ENCODE measurements at regions of chr6 and their contacts with region 1.

Region 1: DNA sequence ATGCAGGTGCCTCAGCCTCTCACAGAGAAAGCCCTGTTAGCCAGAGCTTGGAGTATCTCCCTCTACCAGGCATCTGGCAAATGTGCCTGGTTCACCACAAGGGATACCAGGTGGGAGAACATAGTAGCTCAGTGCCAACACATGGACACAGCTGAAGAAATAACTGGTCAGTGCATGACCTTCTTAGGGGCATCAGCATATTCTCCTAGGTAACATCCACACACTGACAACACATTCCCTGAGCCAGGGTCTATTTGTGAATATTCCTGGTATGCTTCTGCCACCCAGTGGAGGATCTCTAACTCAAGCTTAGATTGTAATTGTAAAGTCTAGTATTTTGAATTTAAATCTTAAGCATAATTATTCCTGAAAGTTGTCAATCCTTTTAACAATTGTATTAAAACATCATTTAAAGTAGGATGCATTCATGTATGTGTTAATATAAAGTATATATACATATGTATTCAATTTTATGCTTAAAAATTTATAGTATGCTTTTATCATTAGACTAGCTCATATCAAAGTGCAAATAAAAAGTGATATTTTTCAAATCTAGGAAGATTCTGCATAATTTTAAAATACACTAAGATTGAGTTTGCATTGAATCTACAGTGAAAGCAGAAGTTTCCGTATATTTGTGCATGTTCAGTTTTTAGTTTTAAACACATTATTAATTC is 45.3 kb upstream of the COL21A1 start:
- DNase-seq: no peak
- H3K4me3 ChIP-seq: no peak overlapping the region
- H3K27ac ChIP-seq: no peak overlapping the region
- H3K4me1 ChIP-seq: peaks cover 0 to 9% (median 0%) of the 10 kb centered on the region in 4 donors
- H3K27me3 ChIP-seq: no peaks in the 10 kb centered on the region
- CTCF ChIP-seq: peak; percentile 50 to 72

Region 2: DNA sequence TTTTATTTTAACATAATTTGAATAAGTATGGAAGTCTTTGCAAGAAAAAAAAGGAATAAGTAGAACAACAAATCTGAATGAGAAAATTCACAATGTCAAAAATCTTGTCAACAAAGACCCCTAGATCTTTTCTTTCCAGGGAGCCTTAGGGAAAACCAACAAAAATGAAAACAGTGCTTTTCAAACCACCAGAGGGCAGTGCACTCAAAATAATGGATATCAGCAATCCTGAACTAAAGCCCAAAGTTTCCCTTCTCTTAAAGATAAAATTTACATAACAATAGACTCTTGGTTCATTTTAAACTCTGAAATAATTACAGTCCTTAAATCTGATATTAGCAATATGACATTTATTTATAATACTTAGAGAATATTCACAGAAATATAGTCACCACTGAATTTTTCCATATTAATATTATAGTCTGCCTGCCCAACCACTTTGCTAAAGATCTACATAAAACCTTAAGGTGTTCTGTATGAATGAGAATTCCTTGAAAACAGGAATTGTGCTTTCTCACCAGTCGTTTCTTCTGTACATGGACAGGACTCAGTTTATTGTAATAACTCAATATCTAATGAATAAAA is 311.9 kb before region 1 on chr6:
- intact Hi-C with region 1: loop called (anchors 5 kb)
- DNase-seq: no peak
- H3K4me3 ChIP-seq: no peak overlapping the region
- H3K27ac ChIP-seq: no peak overlapping the region
- H3K4me1 ChIP-seq: no peaks in the 10 kb centered on the region
- H3K27me3 ChIP-seq: no peaks in the 10 kb centered on the region
- CTCF ChIP-seq: peak; percentile 65 to 77

Region 3: GRCh38 chr6:57040009-57040408 is 747.4 kb after region 1 on chr6:
- intact Hi-C with region 1: no loop called
- DNase-seq: no peak
- H3K4me3 ChIP-seq: no peak overlapping the region
- H3K27ac ChIP-seq: no peak overlapping the region
- H3K4me1 ChIP-seq: no peaks in the 10 kb centered on the region
- H3K27me3 ChIP-seq: peaks cover 0 to 3% of the 10 kb centered on the region in 2 donors
- CTCF ChIP-seq: no peak